GM12878 (cell line): ENCODE measurements at regions of chr4 and their contacts with region 1.

Region 1: DNA sequence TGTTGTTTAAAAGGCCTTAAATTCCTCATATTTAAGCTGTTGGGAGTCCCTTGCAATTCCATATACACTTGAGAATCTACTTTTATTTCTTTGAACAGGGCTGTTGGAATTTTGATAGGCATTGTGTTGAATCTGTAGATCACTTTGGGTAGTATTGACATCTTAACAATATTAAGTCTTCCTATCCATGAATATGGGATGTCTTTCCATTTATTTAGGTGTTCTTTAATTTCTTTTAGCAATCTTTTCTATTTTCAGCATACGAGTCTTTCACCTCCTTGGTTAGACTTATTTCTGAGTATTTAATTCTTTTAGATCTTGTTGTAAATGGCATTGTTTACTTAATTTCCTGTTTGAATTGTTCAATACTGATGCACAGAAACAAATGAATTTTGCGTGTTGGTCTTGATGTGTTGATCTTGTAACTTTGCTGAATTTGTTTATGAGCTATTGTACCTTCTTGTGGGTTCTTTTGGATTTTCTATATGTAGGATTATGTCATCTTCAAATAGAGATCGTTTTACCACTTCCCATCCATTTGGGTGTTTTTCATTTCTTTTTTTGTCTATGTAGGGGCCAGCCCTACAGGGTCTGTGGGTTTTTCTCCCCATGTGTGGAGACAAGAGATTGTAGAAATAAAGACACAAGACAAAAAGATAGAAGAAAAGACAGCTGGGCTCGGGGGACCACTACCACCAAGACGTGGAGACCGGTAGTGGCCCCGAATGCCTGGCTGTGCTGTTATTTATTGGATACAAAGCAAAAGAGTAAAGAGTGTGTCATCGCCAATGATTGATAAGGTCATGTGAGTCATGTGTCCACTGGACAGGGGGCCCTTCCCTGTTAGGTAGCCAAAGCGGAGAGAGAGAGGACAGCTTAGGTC is 18.2 kb upstream of the CTBP1 start:
- DNase-seq: no peak
- ATAC-seq: peak; percentile 84
- H3K4me3 ChIP-seq: peak overlapping the region; percentile 73; the same call in 1 of the 2 replicates
- H3K27ac ChIP-seq: peak overlapping the region; percentile 72
- H3K4me1 ChIP-seq: no peaks in the 10 kb centered on the region
- H3K27me3 ChIP-seq: no peaks in the 10 kb centered on the region
- CTCF ChIP-seq: no peak
- EP300 ChIP-seq: no peak
- POLR2A ChIP-seq: no peak
- RAD21 ChIP-seq: no peak

Region 2: GRCh38 chr4:1130316-1131186 is 136.6 kb before region 1 on chr4:
- CTCF ChIA-PET with region 1: interaction called, 113 read pairs
- POLR2A ChIA-PET with region 1: interaction called, 3 read pairs
- RAD21 ChIA-PET with region 1: interaction called, 40 read pairs
- SMC1A ChIA-PET with region 1: interaction called, 65 read pairs
- in situ Hi-C with region 1: no loop called
- intact Hi-C with region 1: loop called (anchors 1 kb)
- DNase-seq: peak; percentile 57
- ATAC-seq: peak; percentile 100
- H3K4me3 ChIP-seq: no peak overlapping the region
- H3K27ac ChIP-seq: no peak overlapping the region
- H3K4me1 ChIP-seq: no peaks in the 10 kb centered on the region; the same call in 1 of the 2 replicates
- H3K27me3 ChIP-seq: no peaks in the 10 kb centered on the region
- CTCF ChIP-seq: peak; percentile 99 to 100 (median 99); a peak in 5 of 6 replicates
- EP300 ChIP-seq: no peak
- POLR2A ChIP-seq: no peak
- RAD21 ChIP-seq: peak; percentile 100

Region 3: DNA sequence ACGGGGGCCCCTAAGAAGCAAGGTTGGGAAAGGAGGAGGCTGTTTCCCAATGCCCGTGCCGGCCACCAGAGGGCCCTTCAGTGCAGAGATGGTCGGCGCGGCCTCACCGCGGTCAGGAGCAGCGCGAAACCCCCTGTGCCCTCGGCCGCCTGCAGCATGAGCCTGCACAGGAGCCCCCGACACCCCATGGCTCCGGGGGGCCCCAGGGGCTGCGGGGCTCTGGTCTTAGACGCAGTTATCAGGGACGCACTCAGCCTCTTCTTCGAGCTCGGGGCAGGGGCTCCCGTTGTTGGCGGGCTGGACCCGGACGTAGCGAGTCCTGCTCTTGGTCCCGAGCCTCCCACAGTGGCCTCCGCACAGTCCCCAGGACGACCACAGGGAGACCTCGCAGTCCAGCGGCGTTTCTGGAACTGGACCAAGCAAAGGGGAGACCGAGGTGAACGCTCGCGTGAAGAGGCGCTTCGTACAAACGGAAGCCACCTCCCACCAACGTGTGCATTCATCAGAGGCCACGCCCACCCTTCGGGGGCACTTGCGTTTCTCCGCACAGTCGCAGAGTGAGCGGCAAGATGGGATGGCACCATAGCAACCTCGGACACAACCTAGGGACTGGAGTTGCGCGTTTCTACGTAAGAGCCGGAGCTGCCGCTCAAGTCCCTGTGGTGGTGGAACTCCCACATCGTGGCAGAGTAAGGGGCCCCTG is 99.7 kb before region 1 on chr4:
- CTCF ChIA-PET with region 1: interaction called, 66 read pairs
- POLR2A ChIA-PET with region 1: interaction called, 3 read pairs
- RAD21 ChIA-PET with region 1: interaction called, 16 read pairs
- SMC1A ChIA-PET with region 1: interaction called, 26 read pairs
- in situ Hi-C with region 1: loop called (anchors 5 kb)
- intact Hi-C with region 1: loop called (anchors 1 kb)
- DNase-seq: peak; percentile 91
- ATAC-seq: peak; percentile 96
- H3K4me3 ChIP-seq: peak overlapping the region; percentile 85
- H3K27ac ChIP-seq: peak overlapping the region; percentile 80
- H3K4me1 ChIP-seq: peaks cover 24% of the 10 kb centered on the region
- H3K27me3 ChIP-seq: peaks cover 0 to 9% of the 10 kb centered on the region in 2 experiments; a peak in 2 of 4 replicates
- CTCF ChIP-seq: peak; percentile 93 to 95 (median 94); a peak in 5 of 6 replicates
- EP300 ChIP-seq: no peak
- POLR2A ChIP-seq: peak; percentile 86
- RAD21 ChIP-seq: peak; percentile 76

Region 4: GRCh38 chr4:1200425-1201035 is 66.6 kb before region 1 on chr4:
- CTCF ChIA-PET with region 1: interaction called, 10 read pairs
- POLR2A ChIA-PET with region 1: no interaction called
- RAD21 ChIA-PET with region 1: interaction called, 4 read pairs
- SMC1A ChIA-PET with region 1: interaction called, 9 read pairs
- in situ Hi-C with region 1: no loop called
- intact Hi-C with region 1: loop called (anchors 5 kb)
- DNase-seq: no peak
- ATAC-seq: peak; percentile 41
- H3K4me3 ChIP-seq: peak overlapping the region; percentile 75
- H3K27ac ChIP-seq: peak overlapping the region; percentile 77
- H3K4me1 ChIP-seq: peaks cover 38% of the 10 kb centered on the region
- H3K27me3 ChIP-seq: no peaks in the 10 kb centered on the region
- CTCF ChIP-seq: no peak
- EP300 ChIP-seq: no peak
- POLR2A ChIP-seq: no peak
- RAD21 ChIP-seq: no peak

Region 5: DNA sequence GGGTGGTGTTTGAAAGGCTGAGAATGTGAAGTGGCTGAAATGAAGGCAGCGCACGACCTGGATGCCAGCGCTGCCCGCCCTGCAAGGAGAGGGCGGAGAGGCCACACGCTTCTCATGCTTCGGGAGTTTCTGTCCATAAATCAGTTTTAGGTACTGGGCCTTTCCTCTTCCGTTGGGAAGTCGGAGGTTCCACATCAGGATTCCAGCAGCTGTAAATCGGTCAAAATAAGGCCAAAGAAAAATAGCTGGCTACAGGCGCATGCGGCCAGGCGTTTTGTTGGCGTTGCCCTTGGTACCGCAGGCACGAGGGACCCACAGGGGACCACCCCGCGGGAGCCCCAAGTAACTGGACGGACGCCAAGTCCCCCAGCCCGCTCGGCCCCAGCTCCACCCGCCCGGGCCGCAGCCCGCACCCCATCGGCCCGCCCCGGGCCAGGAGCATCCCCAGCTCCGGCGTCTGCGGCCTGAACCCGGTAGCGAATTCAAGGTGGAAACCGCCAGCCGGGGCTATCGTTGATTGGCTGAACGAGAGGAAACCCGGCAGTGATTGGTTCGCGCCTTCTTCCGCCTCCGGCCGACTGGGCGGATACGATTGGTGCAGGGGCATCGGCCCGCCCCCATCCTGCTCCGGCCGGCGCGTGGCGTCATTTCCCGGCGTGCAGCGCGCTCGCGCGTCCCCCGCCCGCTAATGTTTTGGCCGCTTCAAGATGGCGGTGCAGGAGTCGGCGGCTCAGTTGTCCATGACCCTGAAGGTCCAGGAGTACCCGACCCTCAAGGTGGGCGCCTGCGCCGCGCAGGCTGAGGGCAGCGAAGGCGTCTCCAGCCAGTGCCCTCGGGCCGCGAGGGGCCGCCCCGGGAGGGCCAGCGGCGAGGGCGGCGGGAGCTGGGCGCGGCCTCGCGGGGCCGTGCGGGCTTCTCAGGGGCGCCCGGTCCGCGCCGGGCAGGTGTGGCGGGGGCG is 22.4 kb after region 1 on chr4 and contains the start of gene MAEA:
- CTCF ChIA-PET with region 1: interaction called, 12 read pairs
- POLR2A ChIA-PET with region 1: no interaction called
- RAD21 ChIA-PET with region 1: interaction called, 10 read pairs
- SMC1A ChIA-PET with region 1: interaction called, 3 read pairs
- in situ Hi-C with region 1: no loop called
- intact Hi-C with region 1: no loop called
- DNase-seq: peak; percentile 83
- ATAC-seq: peak; percentile 98
- H3K4me3 ChIP-seq: peak within 1 kb of the TSS; percentile 87
- H3K27ac ChIP-seq: peak within 1 kb of the TSS; percentile 78
- H3K4me1 ChIP-seq: peaks cover 19% of the 10 kb centered on the region
- H3K27me3 ChIP-seq: no peaks in the 10 kb centered on the region
- CTCF ChIP-seq: no peak
- EP300 ChIP-seq: no peak
- POLR2A ChIP-seq: peak; percentile 95
- RAD21 ChIP-seq: no peak
- polyA plus RNA-seq, gene MAEA: 3.6 to 7.5 TPM